ENCODE measurements at regions of chr11 and their contacts with region 1.

Region 1: DNA sequence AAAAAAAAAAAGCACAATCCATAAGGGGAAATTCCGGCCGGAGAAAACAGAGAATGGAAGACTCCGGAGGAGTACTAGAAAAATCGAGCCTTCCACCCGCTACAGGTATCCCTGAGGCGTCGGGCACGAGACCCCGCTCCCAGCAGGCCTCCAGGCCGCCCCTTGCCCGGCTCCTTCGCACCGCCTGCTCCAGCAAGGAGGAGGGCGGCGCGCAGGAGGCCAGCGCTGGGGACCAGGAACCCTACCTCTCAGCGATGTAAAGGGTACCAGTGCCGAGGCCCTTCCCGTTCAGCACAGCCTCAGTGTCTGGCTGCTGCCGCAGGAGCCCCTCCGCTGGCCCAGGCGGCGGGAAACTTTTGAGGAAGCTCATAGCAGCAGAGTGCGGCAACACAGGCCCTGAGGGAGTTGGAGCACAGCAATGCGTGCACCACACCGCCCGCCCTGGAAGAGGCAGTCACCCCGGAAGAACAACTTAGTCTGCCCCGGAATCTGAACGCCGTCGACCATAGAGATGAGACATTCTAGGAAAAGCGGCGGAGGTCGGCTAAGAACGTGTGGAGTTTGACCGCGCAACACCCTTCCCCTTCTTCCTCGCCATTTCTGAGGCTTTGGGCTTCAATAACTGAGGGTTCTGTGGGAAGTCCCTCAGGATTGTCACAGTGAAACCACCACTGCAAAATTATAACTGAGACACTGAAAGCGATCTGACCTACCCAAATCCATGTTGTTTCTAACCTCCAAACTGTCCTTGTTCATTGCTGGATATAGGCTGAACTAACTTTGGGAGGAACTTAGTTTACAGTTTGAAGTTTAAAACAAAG is at the start of gene CLNS1A:
- DNase-seq: peak; percentile 61 to 89 (median 74)
- ATAC-seq: peak; percentile 99
- H3K4me3 ChIP-seq: peak within 1 kb of the TSS; percentile 92
- H3K4me3 Mint-ChIP-seq: peak within 1 kb of the TSS; percentile 98
- H3K27ac ChIP-seq: peak within 1 kb of the TSS; percentile 65 to 77
- H3K27ac Mint-ChIP-seq: peak within 1 kb of the TSS; percentile 85
- H3K4me1 ChIP-seq: peaks cover 31% of the 10 kb centered on the region
- H3K4me1 Mint-ChIP-seq: peaks cover 48% of the 10 kb centered on the region
- H3K27me3 ChIP-seq: peaks cover 0 to 2% of the 10 kb centered on the region in 2 experiments
- H3K27me3 Mint-ChIP-seq: no peaks in the 10 kb centered on the region
- CTCF ChIP-seq: no peak
- total RNA-seq, gene CLNS1A: 87.8 to 93.1 TPM

Region 2: GRCh38 chr11:76860539-76861475 is 776.7 kb before region 1 on chr11 and contains the start of gene ACER3:
- CTCF ChIA-PET with region 1: no interaction called
- POLR2A ChIA-PET with region 1: no interaction called
- intact Hi-C with region 1: loop called in 1 of 2 experiments (anchors 5 kb)
- DNase-seq: peak; percentile 33 to 93 (median 76)
- ATAC-seq: peak; percentile 93
- H3K4me3 ChIP-seq: peak within 1 kb of the TSS; percentile 86
- H3K4me3 Mint-ChIP-seq: peak within 1 kb of the TSS; percentile 89
- H3K27ac ChIP-seq: peak within 1 kb of the TSS in 1 of 2 donors; percentile 39
- H3K27ac Mint-ChIP-seq: peak within 1 kb of the TSS; percentile 75
- H3K4me1 ChIP-seq: peaks cover 19% of the 10 kb centered on the region
- H3K4me1 Mint-ChIP-seq: peaks cover 28% of the 10 kb centered on the region
- H3K27me3 ChIP-seq: no peaks in the 10 kb centered on the region
- H3K27me3 Mint-ChIP-seq: no peaks in the 10 kb centered on the region
- CTCF ChIP-seq: no peak
- total RNA-seq, gene ACER3: 6.4 to 7.0 TPM

Region 3: GRCh38 chr11:77411717-77412441 is 225.7 kb before region 1 on chr11:
- CTCF ChIA-PET with region 1: no interaction called
- POLR2A ChIA-PET with region 1: no interaction called
- intact Hi-C with region 1: no loop called
- DNase-seq: peak; percentile 59 to 89 (median 72)
- ATAC-seq: peak; percentile 99
- H3K4me3 ChIP-seq: peak overlapping the region; percentile 73
- H3K4me3 Mint-ChIP-seq: peak overlapping the region; percentile 97
- H3K27ac ChIP-seq: peak overlapping the region in 1 of 2 donors; percentile 25
- H3K27ac Mint-ChIP-seq: peak overlapping the region; percentile 76
- H3K4me1 ChIP-seq: peaks cover 22% of the 10 kb centered on the region
- H3K4me1 Mint-ChIP-seq: peaks cover 42% of the 10 kb centered on the region
- H3K27me3 ChIP-seq: no peaks in the 10 kb centered on the region
- H3K27me3 Mint-ChIP-seq: no peaks in the 10 kb centered on the region
- CTCF ChIP-seq: peak; percentile 11

Region 4: GRCh38 chr11:77658213-77659013 is 20.9 kb after region 1 on chr11:
- CTCF ChIA-PET with region 1: no interaction called
- POLR2A ChIA-PET with region 1: no interaction called
- intact Hi-C with region 1: no loop called
- DNase-seq: no peak
- ATAC-seq: no peak
- H3K4me3 ChIP-seq: no peak overlapping the region
- H3K4me3 Mint-ChIP-seq: no peak overlapping the region
- H3K27ac ChIP-seq: no peak overlapping the region
- H3K27ac Mint-ChIP-seq: no peak overlapping the region
- H3K4me1 ChIP-seq: no peaks in the 10 kb centered on the region
- H3K4me1 Mint-ChIP-seq: no peaks in the 10 kb centered on the region
- H3K27me3 ChIP-seq: no peaks in the 10 kb centered on the region
- H3K27me3 Mint-ChIP-seq: no peaks in the 10 kb centered on the region
- CTCF ChIP-seq: no peak